Heart left ventricle (tissue), 16 donors: ENCODE measurements at regions of chr1 and their contacts with region 1.

Region 1: GRCh38 chr1:202235856-202236837 is 42.5 kb downstream of the LGR6 start:
- DNase-seq: peak; percentile 27 to 74 (median 50)
- ATAC-seq: peak in 3 of 4 donors; percentile 64 to 80 (median 71)
- H3K4me3 ChIP-seq: no peak overlapping the region
- H3K27ac ChIP-seq: no peak overlapping the region
- H3K4me1 ChIP-seq: peaks cover 0 to 6% (median 0%) of the 10 kb centered on the region in 12 donors
- H3K27me3 ChIP-seq: peaks cover 0 to 23% (median 0%) of the 10 kb centered on the region in 9 donors
- CTCF ChIP-seq: peak; percentile 48 to 89 (median 76)
- POLR2A ChIP-seq: no peak

Region 2: DNA sequence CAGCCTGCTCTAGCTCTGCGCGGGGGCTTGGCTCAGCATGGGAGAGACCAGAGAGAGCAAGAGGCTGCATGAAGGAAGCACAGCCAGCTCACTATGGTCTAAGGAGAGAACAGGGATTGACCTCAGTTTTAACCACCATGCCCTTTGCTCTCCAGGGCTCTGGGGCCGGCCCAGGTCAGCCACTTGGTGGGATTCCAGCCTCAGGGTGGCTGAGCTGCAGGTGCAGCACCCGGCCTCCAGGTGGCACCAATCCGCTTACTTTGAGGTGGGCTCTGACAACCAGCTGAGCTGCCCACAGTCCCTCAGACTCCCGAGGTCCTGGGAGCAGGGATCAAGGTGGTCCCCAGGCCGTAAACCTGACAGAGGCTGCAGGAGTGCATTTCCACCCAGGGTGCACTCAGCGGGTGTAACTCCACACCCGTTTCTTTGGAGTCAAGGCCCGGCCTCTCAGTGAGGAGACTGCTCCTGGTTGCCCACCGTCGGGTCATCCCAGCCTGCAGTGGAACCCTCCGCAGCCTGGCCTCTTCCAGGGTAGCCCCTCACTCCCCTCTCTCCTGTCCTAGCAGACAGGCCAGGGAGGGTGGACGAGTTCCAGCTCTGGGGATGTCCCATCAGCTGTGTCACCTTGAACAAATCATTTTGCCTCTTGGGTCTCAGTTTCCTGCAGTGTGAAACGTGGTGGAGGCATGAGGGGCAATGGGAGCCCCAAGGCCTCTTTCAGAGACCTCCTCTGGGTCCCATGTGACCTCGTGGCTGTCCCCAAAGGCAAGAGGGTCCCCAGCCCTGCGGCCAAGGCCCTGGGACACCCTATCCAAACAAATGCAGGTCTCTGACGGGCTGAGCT is 43.2 kb before region 1 on chr1:
- intact Hi-C with region 1: loop called in 1 of 10 experiments (anchors 2 kb)
- DNase-seq: peak in 4 of 5 donors; percentile 53 to 76 (median 66)
- ATAC-seq: peak; percentile 36 to 74 (median 60)
- H3K4me3 ChIP-seq: peak overlapping the region in 8 of 12 donors; percentile 16 to 47 (median 26)
- H3K27ac ChIP-seq: no peak overlapping the region
- H3K4me1 ChIP-seq: peaks cover 0 to 18% (median 6%) of the 10 kb centered on the region in 12 donors
- H3K27me3 ChIP-seq: peaks cover 6 to 31% (median 17%) of the 10 kb centered on the region in 9 donors
- CTCF ChIP-seq: peak; percentile 68 to 92 (median 84)
- POLR2A ChIP-seq: no peak